H1 (cell line): ENCODE measurements at regions of chr20 and their contacts with region 1.

Region 1: GRCh38 chr20:35447082-35447789 is 8.2 kb upstream of the CEP250 start:
- DNase-seq: peak; percentile 69 to 100
- H3K4me3 ChIP-seq: peak overlapping the region in 1 of 4 experiments; percentile 54; a peak in 3 of 8 replicates
- H3K27ac ChIP-seq: no peak overlapping the region
- H3K4me1 ChIP-seq: peaks cover 0 to 3% (median 0%) of the 10 kb centered on the region in 4 experiments; a peak in 1 of 7 replicates
- H3K27me3 ChIP-seq: no peaks in the 10 kb centered on the region
- CTCF ChIP-seq: peak; percentile 79 to 89 (median 87)
- EP300 ChIP-seq: no peak
- POLR2A ChIP-seq: no peak
- RAD21 ChIP-seq: peak; percentile 41 to 65

Region 2: DNA sequence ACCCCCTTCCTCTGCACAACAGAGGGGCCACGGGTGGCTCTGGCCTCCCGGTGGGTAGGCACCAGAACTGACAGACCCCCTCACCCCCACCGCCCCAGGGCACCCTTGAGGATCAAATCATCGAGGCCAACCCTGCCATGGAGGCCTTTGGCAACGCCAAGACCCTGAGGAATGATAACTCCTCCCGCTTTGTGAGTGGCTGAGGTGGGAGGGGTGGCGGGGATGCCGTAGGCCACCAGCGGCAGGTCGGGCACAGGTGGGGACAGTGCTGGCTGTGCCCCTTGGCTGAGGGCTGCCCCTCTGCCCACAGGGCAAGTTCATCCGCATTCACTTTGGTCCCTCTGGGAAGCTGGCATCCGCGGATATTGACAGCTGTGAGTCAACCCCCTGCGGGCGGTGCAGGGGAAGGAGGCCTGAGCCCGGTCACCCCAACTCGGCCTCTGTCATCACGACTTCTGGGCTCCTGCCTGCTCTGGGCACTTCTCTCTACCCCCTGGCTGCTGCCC is 462.4 kb before region 1 on chr20:
- CTCF ChIA-PET with region 1: no interaction called
- POLR2A ChIA-PET with region 1: no interaction called
- DNase-seq: no peak
- H3K4me3 ChIP-seq: no peak overlapping the region
- H3K27ac ChIP-seq: no peak overlapping the region
- H3K4me1 ChIP-seq: peaks cover 0 to 40% (median 27%) of the 10 kb centered on the region in 4 experiments; a peak in 6 of 7 replicates
- H3K27me3 ChIP-seq: peaks cover 0 to 16% (median 9%) of the 10 kb centered on the region in 4 experiments; a peak in 3 of 7 replicates
- CTCF ChIP-seq: no peak
- EP300 ChIP-seq: no peak
- POLR2A ChIP-seq: no peak
- RAD21 ChIP-seq: no peak

Region 3: GRCh38 chr20:35432430-35432735 is 14.9 kb before region 1 on chr20:
- CTCF ChIA-PET with region 1: interaction called, 78 read pairs
- POLR2A ChIA-PET with region 1: interaction called, 98 read pairs
- DNase-seq: no peak
- H3K4me3 ChIP-seq: no peak overlapping the region
- H3K27ac ChIP-seq: no peak overlapping the region
- H3K4me1 ChIP-seq: peaks cover 5 to 22% (median 12%) of the 10 kb centered on the region in 4 experiments
- H3K27me3 ChIP-seq: no peaks in the 10 kb centered on the region
- CTCF ChIP-seq: peak; percentile 17 to 27 (median 22); a peak in 3 of 4 replicates
- EP300 ChIP-seq: no peak
- POLR2A ChIP-seq: no peak
- RAD21 ChIP-seq: peak in 1 of 2 experiments; percentile 27; a peak in 1 of 4 replicates

Region 4: GRCh38 chr20:35699127-35699975 is 252.1 kb after region 1 on chr20 and contains the starts of genes NFS1 and ROMO1:
- CTCF ChIA-PET with region 1: no interaction called
- POLR2A ChIA-PET with region 1: no interaction called
- DNase-seq: peak; percentile 65 to 90
- H3K4me3 ChIP-seq: peak within 1 kb of the TSS; percentile 66 to 99 (median 88)
- H3K27ac ChIP-seq: peak within 1 kb of the TSS; percentile 78
- H3K4me1 ChIP-seq: peaks cover 0 to 2% (median under 1%) of the 10 kb centered on the region in 4 experiments; a peak in 3 of 7 replicates
- H3K27me3 ChIP-seq: no peaks in the 10 kb centered on the region
- CTCF ChIP-seq: peak in 2 of 3 experiments; percentile 32 to 39; a peak in 2 of 4 replicates
- EP300 ChIP-seq: peak in 1 of 2 experiments; percentile 16; a peak in 1 of 3 replicates
- POLR2A ChIP-seq: peak; percentile 83 to 93
- RAD21 ChIP-seq: peak; percentile 7 to 31; a peak in 1 of 4 replicates
- total RNA-seq, gene NFS1: 25.1 and 26.1 TPM in 2 replicates
- total RNA-seq, gene ROMO1: 164 and 173 TPM in 2 replicates